ENCODE measurements at regions of chr6 and their contacts with region 1.

Region 1: GRCh38 chr6:87393022-87393622 is 14.7 kb upstream of the CFAP206 start:
- DNase-seq: no peak
- ATAC-seq: peak; percentile 79 to 80
- H3K4me3 ChIP-seq: no peak overlapping the region
- H3K27ac ChIP-seq: no peak overlapping the region
- H3K4me1 ChIP-seq: no peaks in the 10 kb centered on the region
- H3K27me3 ChIP-seq: no peaks in the 10 kb centered on the region
- CTCF ChIP-seq: peak; percentile 61 to 73 (median 68)
- POLR2A ChIP-seq: no peak

Region 2: GRCh38 chr6:88780714-88781389 is 1387.7 kb after region 1 on chr6:
- in situ Hi-C with region 1: no loop called
- intact Hi-C with region 1: loop called (anchors 2 kb)
- DNase-seq: peak in 1 of 2 donors; percentile 7
- ATAC-seq: peak in 1 of 2 donors; percentile 58
- H3K4me3 ChIP-seq: no peak overlapping the region
- H3K27ac ChIP-seq: no peak overlapping the region
- H3K4me1 ChIP-seq: no peaks in the 10 kb centered on the region
- H3K27me3 ChIP-seq: no peaks in the 10 kb centered on the region
- CTCF ChIP-seq: peak in 4 of 5 experiments; percentile 64 to 83 (median 74)
- POLR2A ChIP-seq: no peak

Region 3: DNA sequence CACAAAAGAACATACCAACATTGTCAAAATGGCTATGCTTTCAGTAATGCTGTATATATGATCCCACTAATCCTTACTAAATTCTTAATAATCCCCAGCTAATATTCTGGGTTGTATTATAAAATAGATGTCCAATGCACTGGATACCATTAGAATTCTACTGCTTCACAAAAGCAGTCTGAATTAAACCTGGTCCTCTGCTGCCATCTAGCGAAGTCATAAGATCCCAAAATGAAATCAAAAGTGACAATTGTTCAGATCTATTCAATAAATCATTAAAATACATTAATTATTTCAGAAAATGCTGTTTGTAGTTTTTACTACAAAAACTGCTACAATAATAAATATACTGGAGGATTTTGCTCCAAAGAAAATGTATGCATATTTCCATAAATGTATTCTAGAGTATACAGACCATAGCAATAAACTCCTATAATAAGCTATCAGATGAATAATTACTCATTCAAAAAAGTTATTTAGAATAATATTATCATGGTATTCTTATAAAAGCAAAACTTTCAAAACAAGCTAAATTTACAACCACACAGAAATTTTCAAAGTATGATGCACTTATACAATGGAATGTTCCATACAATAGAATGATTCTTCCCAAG is 1477.7 kb after region 1 on chr6:
- in situ Hi-C with region 1: loop called in 3 of 4 experiments (anchors 25 kb)
- intact Hi-C with region 1: loop called (anchors 2 kb)
- DNase-seq: no peak
- ATAC-seq: peak; percentile 36 to 58
- H3K4me3 ChIP-seq: no peak overlapping the region
- H3K27ac ChIP-seq: no peak overlapping the region
- H3K4me1 ChIP-seq: peaks cover 8 to 13% of the 10 kb centered on the region in 2 donors
- H3K27me3 ChIP-seq: no peaks in the 10 kb centered on the region
- CTCF ChIP-seq: peak; percentile 53 to 71 (median 67)
- POLR2A ChIP-seq: no peak

Measured in gastrocnemius medialis (tissue), 4 donors.